ENCODE measurements at regions of chr7 and their contacts with region 1.

Region 1: DNA sequence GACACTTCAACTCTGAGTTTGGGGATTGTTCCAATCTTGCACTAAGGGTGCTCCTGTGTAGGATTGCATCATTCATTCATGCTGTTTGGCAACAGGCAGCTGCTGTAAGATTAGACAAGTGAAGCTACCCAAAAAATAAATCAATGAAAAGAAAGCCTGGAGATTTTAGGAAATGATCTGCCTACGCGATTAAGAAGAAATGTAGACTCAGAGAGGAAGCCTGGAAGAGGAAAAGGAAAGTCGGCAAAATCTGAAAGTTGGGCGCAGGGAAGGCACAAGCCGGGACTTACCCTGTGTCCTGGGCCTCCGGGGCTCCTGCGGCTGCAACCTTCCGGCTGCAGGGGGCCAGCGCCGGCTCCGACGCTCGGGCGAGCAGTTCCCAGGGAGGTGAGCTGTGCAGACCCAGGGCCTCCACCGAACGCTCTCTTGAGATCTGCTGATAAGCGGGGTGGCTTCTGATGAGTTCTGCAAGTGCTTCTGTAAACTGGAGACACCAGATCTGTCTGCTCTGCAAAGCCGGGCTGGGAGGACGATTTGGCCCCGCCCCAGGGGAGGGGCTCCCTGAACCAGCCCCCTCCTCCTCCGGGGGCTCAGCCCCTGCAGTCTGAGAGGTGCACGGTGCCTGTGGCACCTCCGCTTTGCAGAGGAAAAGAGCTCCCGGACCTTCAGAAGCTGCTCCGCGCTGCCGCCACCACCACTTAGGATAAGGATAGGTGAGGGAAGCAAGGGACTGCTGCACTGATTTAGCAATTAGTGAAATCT is 17.4 kb downstream of the PSPH start:
- DNase-seq: peak; percentile 59 to 74 (median 66)
- H3K4me3 ChIP-seq: peak overlapping the region; percentile 54 to 86 (median 59)
- H3K27ac ChIP-seq: peak overlapping the region in 4 of 5 donors; percentile 41 to 62 (median 50)
- H3K4me1 ChIP-seq: peaks cover 0 to 4% of the 10 kb centered on the region in 2 donors
- H3K27me3 ChIP-seq: no peaks in the 10 kb centered on the region
- CTCF ChIP-seq: peak in 3 of 6 experiments; percentile 24 to 33 (median 32)
- POLR2A ChIP-seq: peak in 1 of 2 donors; percentile 44

Region 2: DNA sequence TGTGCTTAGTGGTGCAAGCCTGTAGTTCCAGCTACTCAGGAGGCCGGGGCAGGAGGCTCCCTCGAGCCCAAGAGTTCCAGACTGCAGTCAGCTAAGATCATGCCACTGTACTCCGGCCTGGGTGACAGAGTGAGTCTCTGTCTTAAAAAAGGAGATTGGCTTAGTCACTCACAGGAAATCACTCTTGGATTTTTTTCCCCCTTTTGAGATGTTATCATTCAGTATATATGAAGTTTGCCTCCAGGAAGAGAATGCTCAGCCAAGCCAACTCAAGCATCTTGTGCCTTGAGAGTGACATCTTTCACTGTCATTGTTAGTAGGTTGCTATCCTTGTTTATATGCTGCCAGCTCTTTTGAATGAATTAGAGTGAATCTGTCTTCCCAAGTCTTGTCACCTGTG is 41.5 kb before region 1 on chr7:
- intact Hi-C with region 1: loop called in 1 of 2 experiments (anchors 2 kb)
- DNase-seq: peak in 1 of 7 donors; percentile 9
- H3K4me3 ChIP-seq: no peak overlapping the region
- H3K27ac ChIP-seq: no peak overlapping the region
- H3K4me1 ChIP-seq: no peaks in the 10 kb centered on the region
- H3K27me3 ChIP-seq: no peaks in the 10 kb centered on the region
- CTCF ChIP-seq: no peak
- POLR2A ChIP-seq: no peak

Region 3: DNA sequence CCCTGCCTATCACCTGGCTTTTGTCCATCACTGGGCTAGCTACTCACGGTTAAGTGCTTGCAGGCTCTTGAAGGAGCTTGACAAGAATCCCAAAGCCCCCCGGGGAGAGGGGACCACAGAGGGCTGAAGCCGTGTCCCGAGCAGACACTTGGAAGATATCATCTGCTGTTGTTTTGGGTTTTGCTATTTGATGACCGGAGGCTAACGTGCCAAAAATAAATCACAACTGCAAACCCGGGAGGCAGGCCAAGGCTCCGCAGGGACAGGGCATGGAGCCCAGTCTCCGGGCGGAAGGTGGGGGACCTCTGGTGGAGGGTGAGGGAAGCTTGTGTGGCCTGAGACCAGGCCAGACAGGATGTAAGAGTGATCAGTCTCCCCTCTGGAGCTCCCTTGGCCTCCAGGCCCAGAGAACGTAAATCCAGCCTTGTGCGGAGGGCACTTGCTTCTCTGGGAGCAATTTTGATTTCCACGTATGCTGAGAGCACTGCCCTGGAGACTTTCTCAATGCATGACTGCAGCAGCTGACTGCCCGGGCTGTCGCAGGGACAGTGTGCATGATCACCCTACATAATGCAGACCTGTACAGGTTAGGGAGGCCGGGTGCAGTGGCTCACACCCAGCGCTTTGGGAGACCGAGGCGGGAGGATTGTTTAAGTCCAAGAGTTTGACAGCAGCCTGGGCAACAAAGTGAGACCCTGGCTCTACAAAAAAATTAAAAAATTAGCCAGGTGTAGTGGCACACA is 59.1 kb after region 1 on chr7 and contains the start of gene PHKG1:
- intact Hi-C with region 1: no loop called
- DNase-seq: peak; percentile 90 to 96 (median 92)
- H3K4me3 ChIP-seq: peak within 1 kb of the TSS in 1 of 4 donors; percentile 38
- H3K27ac ChIP-seq: peak within 1 kb of the TSS in 4 of 5 donors; percentile 61 to 77 (median 74)
- H3K4me1 ChIP-seq: peaks cover 10 to 15% of the 10 kb centered on the region in 2 donors
- H3K27me3 ChIP-seq: no peaks in the 10 kb centered on the region
- CTCF ChIP-seq: peak; percentile 18 to 65 (median 46)
- POLR2A ChIP-seq: peak in 1 of 2 donors; percentile 52
- total RNA-seq, gene PHKG1: 2.2 to 10.2 (median 5.7) TPM

Measured in adrenal gland (tissue), 19 donors.